ENCODE measurements at regions of chr3 and their contacts with region 1.

Region 1: GRCh38 chr3:30779686-30780287 is 114.7 kb downstream of the GADL1 start:
- DNase-seq: no peak
- ATAC-seq: peak in 1 of 2 donors; percentile 26
- H3K4me3 ChIP-seq: no peak overlapping the region
- H3K27ac ChIP-seq: no peak overlapping the region
- H3K4me1 ChIP-seq: no peaks in the 10 kb centered on the region
- H3K27me3 ChIP-seq: no peaks in the 10 kb centered on the region

Region 2: GRCh38 chr3:31105438-31106077 is 325.8 kb after region 1 on chr3:
- intact Hi-C with region 1: no loop called
- DNase-seq: no peak
- ATAC-seq: no peak
- H3K4me3 ChIP-seq: no peak overlapping the region
- H3K27ac ChIP-seq: no peak overlapping the region
- H3K4me1 ChIP-seq: no peaks in the 10 kb centered on the region
- H3K27me3 ChIP-seq: no peaks in the 10 kb centered on the region

Region 3: GRCh38 chr3:31777092-31777491 is 997.3 kb after region 1 on chr3:
- intact Hi-C with region 1: loop called in 1 of 4 experiments (anchors 10 kb)
- DNase-seq: no peak
- ATAC-seq: no peak
- H3K4me3 ChIP-seq: no peak overlapping the region
- H3K27ac ChIP-seq: no peak overlapping the region
- H3K4me1 ChIP-seq: no peaks in the 10 kb centered on the region
- H3K27me3 ChIP-seq: no peaks in the 10 kb centered on the region

Measured in right cardiac atrium (tissue), 5 donors.